Heart left ventricle (tissue), 16 donors: ENCODE measurements at regions of chr15 and their contacts with region 1.

Region 1: GRCh38 chr15:41621200-41622193 is 38.7 kb upstream of the MGA start:
- DNase-seq: peak; percentile 78 to 88 (median 82)
- ATAC-seq: peak; percentile 68 to 91 (median 88)
- H3K4me3 ChIP-seq: peak overlapping the region; percentile 34 to 71 (median 56)
- H3K27ac ChIP-seq: peak overlapping the region; percentile 5 to 90 (median 66)
- H3K4me1 ChIP-seq: peaks cover 0 to 19% (median 11%) of the 10 kb centered on the region in 12 donors
- H3K27me3 ChIP-seq: no peaks in the 10 kb centered on the region
- CTCF ChIP-seq: no peak
- POLR2A ChIP-seq: peak in 1 of 2 donors; percentile 20

Region 2: DNA sequence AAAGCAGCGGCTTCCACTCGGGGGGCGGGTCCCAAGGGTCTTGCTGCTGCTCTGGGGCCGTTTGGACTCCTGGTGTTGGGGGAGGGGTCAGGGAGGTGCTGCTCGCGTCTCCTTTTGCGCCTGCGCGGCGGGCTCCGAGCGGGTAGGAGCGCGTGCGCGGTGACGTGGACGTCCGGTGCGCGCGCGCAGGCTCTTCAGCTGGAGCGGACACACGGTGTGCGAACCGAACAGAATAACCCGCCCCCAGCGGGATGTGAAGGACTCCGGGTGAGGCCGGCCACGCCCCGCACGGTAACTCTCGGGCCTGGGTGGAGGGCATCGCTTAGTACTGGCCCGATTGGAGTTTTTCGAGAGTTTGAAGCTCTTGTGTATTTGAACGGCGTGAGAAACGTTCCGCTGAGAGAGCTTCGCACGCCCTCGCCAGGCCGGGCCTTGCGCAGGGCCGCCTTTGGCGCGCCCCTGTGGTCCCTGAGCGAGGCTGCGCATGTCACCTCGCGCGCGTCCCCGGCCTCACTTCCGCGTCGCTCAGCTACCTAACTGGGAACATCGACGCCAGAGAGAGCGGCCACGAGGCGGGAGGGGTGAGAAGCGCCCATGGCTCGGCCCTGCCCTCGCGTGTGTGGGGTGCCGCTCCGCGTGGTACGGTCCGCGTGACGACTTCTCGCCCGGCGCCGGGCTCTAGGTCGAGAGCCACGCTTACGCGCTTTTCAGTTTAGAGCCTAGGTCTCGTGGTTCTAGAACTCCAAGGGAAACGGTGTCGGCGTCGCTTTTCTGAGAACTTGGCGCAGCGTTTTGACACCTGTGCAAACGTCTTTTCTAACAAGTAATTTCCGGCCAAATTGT is 39.0 kb after region 1 on chr15 and contains the start of gene MGA:
- intact Hi-C with region 1: loop called in 2 of 10 experiments (anchors 5 kb)
- DNase-seq: peak; percentile 91 to 96 (median 93)
- ATAC-seq: peak; percentile 92 to 95 (median 94)
- H3K4me3 ChIP-seq: peak within 1 kb of the TSS; percentile 34 to 77 (median 64)
- H3K27ac ChIP-seq: peak within 1 kb of the TSS; percentile 45 to 92 (median 78)
- H3K4me1 ChIP-seq: peaks cover 0 to 58% (median 24%) of the 10 kb centered on the region in 12 donors
- H3K27me3 ChIP-seq: no peaks in the 10 kb centered on the region
- CTCF ChIP-seq: peak in 4 of 12 donors; percentile 14 to 43 (median 31)
- POLR2A ChIP-seq: peak in 1 of 2 donors; percentile 53
- total RNA-seq, gene MGA: 23.1 to 58.7 (median 37.2) TPM

Region 3: GRCh38 chr15:41683955-41684354 is 62.5 kb after region 1 on chr15:
- intact Hi-C with region 1: no loop called
- DNase-seq: no peak
- ATAC-seq: no peak
- H3K4me3 ChIP-seq: no peak overlapping the region
- H3K27ac ChIP-seq: no peak overlapping the region
- H3K4me1 ChIP-seq: peaks cover 0 to 21% (median 0%) of the 10 kb centered on the region in 12 donors
- H3K27me3 ChIP-seq: no peaks in the 10 kb centered on the region
- CTCF ChIP-seq: no peak
- POLR2A ChIP-seq: no peak

Region 4: DNA sequence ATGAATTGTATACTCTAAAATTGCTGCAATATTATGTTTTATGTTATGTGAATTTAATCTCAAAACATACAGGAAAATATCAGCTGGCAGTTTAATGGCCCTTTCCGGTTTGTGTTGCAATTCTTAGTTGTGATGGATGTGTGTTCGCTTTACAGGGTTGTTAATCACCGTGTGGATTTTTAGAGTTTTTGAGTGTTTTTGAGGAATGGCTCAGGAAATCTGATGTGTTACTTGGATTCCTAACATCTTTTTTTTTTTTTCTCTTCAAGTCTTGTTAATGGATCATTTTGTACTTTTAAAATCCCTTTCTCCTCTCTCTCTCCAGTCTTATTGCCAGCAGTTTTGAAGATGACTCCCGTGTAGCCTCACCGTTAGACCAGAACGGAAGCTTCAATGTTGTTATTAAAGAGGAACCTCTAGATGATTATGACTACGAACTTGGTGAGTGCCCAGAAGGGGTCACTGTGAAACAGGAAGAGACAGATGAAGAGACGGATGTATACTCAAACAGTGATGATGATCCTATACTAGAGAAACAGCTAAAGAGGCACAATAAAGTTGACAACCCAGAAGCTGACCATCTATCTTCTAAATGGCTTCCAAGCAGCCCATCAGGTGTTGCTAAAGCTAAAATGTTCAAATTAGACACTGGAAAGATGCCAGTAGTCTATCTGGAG is 74.4 kb after region 1 on chr15:
- intact Hi-C with region 1: no loop called
- DNase-seq: peak in 1 of 5 donors; percentile 12
- ATAC-seq: peak in 3 of 4 donors; percentile 54 to 70 (median 55)
- H3K4me3 ChIP-seq: no peak overlapping the region
- H3K27ac ChIP-seq: no peak overlapping the region
- H3K4me1 ChIP-seq: peaks cover 0 to 36% (median 18%) of the 10 kb centered on the region in 12 donors
- H3K27me3 ChIP-seq: no peaks in the 10 kb centered on the region
- CTCF ChIP-seq: peak in 4 of 12 donors; percentile 18 to 40 (median 32)
- POLR2A ChIP-seq: no peak